ENCODE measurements at regions of chr18 and their contacts with region 1.

Region 1: DNA sequence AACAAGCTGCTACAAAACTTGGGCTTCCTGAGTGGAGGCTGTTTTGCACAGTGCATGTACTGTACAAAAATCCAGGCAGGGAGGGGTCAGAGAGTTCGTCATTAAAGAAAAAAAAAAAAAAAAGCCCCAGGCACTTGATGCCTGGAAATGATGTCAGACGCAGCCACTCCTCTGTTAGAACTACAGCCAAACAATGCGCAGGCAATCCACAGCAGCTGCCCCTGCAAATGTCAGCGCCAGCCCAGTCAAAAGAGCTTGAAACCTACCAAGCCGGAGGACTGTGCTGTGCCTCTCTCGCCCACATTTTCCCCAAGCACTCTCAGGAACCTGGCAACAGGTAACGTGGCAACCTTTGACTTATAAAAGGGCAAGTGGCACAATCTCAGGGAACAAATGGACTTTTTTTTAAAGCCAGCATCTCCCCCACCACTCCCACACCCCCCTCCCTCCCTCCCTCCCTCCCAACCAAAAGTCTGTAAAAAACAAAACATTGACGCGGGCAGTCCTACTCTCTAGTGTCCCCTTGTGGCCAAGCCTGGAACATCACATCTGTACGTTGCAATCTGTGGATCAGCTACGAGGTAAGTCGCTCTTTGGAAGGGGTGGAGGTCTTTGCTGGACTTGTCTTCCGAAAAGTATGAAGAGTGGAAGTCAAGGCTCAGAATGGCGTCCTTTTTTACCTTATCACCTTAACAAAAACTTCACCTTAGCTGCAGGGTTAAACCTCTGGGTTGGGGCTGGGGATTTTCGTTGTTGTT is 144.1 kb downstream of the TGIF1 start:
- DNase-seq: peak; percentile 86 to 95 (median 91)
- ATAC-seq: peak; percentile 81 to 88 (median 86)
- H3K4me3 ChIP-seq: peak overlapping the region; percentile 29 to 68 (median 54)
- H3K27ac ChIP-seq: peak overlapping the region; percentile 90 to 97 (median 96)
- H3K4me1 ChIP-seq: peaks cover 5 to 55% (median 41%) of the 10 kb centered on the region in 12 donors
- H3K27me3 ChIP-seq: no peaks in the 10 kb centered on the region
- CTCF ChIP-seq: peak; percentile 77 to 97 (median 85)
- POLR2A ChIP-seq: peak in 1 of 2 donors; percentile 33

Region 2: GRCh38 chr18:3261371-3262246 is 332.5 kb before region 1 on chr18 and contains the start of gene MYL12B:
- intact Hi-C with region 1: loop called in 1 of 10 experiments (anchors 5 kb)
- DNase-seq: peak; percentile 86 to 92 (median 87)
- ATAC-seq: peak; percentile 36 to 94 (median 74)
- H3K4me3 ChIP-seq: peak within 1 kb of the TSS; percentile 68 to 96 (median 88)
- H3K27ac ChIP-seq: peak within 1 kb of the TSS; percentile 95 to 100 (median 97)
- H3K4me1 ChIP-seq: peaks cover 12 to 86% (median 48%) of the 10 kb centered on the region in 12 donors
- H3K27me3 ChIP-seq: no peaks in the 10 kb centered on the region
- CTCF ChIP-seq: peak in 2 of 12 donors; percentile 17 to 18
- POLR2A ChIP-seq: peak in 1 of 2 donors; percentile 46
- total RNA-seq, gene MYL12B: 185 to 292 (median 210) TPM

Region 3: GRCh38 chr18:3454365-3455089 is 139.6 kb before region 1 on chr18:
- intact Hi-C with region 1: loop called (anchors 2 to 5 kb)
- DNase-seq: peak in 2 of 5 donors; percentile 35 to 48
- ATAC-seq: no peak
- H3K4me3 ChIP-seq: peak overlapping the region in 11 of 12 donors; percentile 8 to 93 (median 77)
- H3K27ac ChIP-seq: peak overlapping the region; percentile 36 to 100 (median 97)
- H3K4me1 ChIP-seq: peaks cover 0 to 53% (median 20%) of the 10 kb centered on the region in 12 donors
- H3K27me3 ChIP-seq: no peaks in the 10 kb centered on the region
- CTCF ChIP-seq: peak; percentile 49 to 84 (median 73)
- POLR2A ChIP-seq: no peak

Region 4: GRCh38 chr18:3623769-3624545 is 29.9 kb after region 1 on chr18:
- intact Hi-C with region 1: loop called in 2 of 10 experiments (anchors 1 to 2 kb)
- DNase-seq: peak; percentile 73 to 90 (median 82)
- ATAC-seq: peak; percentile 55 to 93 (median 88)
- H3K4me3 ChIP-seq: peak overlapping the region in 10 of 12 donors; percentile 1 to 19 (median 8)
- H3K27ac ChIP-seq: peak overlapping the region; percentile 61 to 89 (median 86)
- H3K4me1 ChIP-seq: peaks cover 0 to 34% (median 21%) of the 10 kb centered on the region in 12 donors
- H3K27me3 ChIP-seq: no peaks in the 10 kb centered on the region
- CTCF ChIP-seq: no peak
- POLR2A ChIP-seq: peak in 1 of 2 donors; percentile 65

Region 5: DNA sequence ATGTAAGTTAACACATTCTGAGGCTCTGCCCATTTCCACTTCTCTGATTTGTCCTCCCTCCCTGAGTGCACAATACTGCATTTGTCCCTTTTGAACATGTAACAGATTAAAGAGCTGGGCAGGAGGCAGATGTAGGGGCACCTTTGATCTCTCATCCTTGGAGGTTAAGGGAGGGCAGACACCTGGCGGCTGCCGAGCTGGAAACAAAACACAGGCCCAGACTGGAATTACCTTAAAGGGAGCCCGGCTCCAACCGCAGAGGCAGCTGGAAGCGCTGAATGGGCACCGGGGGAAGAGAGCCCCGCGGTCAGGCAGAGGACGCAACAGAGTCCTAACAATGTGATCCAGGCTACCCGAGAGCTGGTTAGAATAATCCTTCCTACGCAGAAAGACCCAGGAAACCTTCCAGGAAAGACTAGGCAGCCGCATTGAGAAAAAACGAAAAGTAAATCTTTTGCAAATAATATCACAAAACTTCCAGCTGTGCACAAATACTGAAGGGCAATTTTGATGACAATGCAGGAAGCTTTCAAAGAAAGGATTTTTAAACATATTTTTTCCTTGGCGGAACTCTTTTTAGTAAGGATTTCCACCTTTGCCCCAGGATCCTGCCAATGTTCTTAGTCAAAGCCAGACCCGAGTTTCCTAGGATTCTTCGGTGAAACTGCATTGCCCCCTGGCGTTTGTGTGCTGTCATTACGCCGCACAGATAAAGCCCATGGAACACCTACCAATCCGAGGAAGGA is 71.9 kb after region 1 on chr18:
- intact Hi-C with region 1: loop called in 9 of 10 experiments (anchors 1 to 10 kb)
- DNase-seq: peak; percentile 73 to 86 (median 78)
- ATAC-seq: peak; percentile 76 to 94 (median 90)
- H3K4me3 ChIP-seq: peak overlapping the region in 10 of 12 donors; percentile 20 to 43 (median 33)
- H3K27ac ChIP-seq: peak overlapping the region in 9 of 12 donors; percentile 8 to 68 (median 53)
- H3K4me1 ChIP-seq: peaks cover 0 to 27% (median 3%) of the 10 kb centered on the region in 12 donors
- H3K27me3 ChIP-seq: no peaks in the 10 kb centered on the region
- CTCF ChIP-seq: peak; percentile 87 to 98 (median 91)
- POLR2A ChIP-seq: no peak

Measured in heart left ventricle (tissue), 16 donors.